Dorsolateral prefrontal cortex (tissue), 120 donors: ENCODE measurements at regions of chr22 and their contacts with region 1.

Region 1: DNA sequence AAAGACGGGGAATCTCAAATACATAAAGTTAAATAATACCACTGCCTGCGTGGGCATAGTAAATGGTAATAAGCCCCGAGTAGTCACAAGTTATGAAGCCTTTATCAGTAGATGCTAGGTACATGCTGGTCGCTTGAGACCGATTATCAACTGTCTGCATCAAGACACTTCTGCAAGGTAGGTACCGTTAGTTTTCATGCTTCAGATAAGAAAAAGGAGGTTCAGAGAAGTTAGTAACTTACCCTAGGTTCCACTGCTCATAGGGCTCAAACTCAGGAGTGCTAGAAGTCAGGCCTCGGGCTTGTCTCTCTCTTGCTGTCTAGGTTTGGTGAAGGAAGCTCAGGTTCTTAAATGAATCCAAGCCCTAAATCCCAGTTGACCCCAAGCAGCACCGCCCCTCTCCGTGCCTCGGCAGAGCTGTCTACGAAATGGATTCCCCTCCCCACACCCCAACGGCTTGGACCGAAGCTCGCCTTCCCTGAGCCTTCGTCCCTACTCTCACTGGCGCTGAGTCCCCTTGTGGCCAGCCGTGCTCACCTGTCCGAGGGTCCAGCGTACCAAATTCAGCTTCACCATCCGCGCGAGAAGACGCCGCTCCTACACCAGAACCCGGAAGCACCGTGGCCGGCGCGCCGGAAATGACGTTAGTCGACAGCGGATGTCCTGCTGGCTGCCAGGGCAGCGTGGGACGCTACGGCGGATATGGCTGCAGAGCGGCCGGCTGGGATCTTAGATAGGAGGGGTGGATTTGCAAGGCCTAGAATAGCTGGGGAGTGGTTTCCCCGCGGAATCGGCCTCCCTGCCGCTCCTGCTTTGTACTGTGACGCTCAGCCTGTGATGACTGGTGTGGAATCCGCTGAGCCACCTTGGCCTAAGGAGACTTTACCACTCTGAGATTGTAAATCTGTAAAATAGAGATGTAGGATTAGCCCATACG is at the start of gene TFIP11:
- DNase-seq: peak; percentile 93 to 99 (median 96)
- H3K4me3 ChIP-seq: peak within 1 kb of the TSS; percentile 52 to 100 (median 91)
- H3K27ac ChIP-seq: peak within 1 kb of the TSS in 55 of 59 donors; percentile 9 to 85 (median 69)
- H3K27me3 ChIP-seq: no peaks in the 10 kb centered on the region
- CTCF ChIP-seq: peak in 26 of 56 donors; percentile 9 to 54 (median 25)
- total RNA-seq, gene TFIP11: 27.4 to 51.0 (median 35.3) TPM

Region 2: GRCh38 chr22:26589845-26590736 is 78.0 kb after region 1 on chr22 and contains the start of gene TPST2:
- intact Hi-C with region 1: loop called in 1 of 2 experiments (anchors 5 kb)
- DNase-seq: peak; percentile 43 to 85 (median 76)
- H3K4me3 ChIP-seq: peak within 1 kb of the TSS; percentile 55 to 91 (median 78)
- H3K27ac ChIP-seq: peak within 1 kb of the TSS in 54 of 59 donors; percentile 4 to 93 (median 78)
- H3K27me3 ChIP-seq: no peaks in the 10 kb centered on the region
- CTCF ChIP-seq: peak in 3 of 56 donors; percentile 8 to 24 (median 17)
- total RNA-seq, gene TPST2: 17.2 to 54.7 (median 31.9) TPM